Astrocyte of the cerebellum (primary cell): ENCODE measurements at regions of chr12 and their contacts with region 1.

Region 1: GRCh38 chr12:26732005-26732908 is 100.7 kb downstream of the ITPR2 start:
- DNase-seq: no peak
- H3K4me3 ChIP-seq: no peak overlapping the region
- CTCF ChIP-seq: no peak

Region 2: DNA sequence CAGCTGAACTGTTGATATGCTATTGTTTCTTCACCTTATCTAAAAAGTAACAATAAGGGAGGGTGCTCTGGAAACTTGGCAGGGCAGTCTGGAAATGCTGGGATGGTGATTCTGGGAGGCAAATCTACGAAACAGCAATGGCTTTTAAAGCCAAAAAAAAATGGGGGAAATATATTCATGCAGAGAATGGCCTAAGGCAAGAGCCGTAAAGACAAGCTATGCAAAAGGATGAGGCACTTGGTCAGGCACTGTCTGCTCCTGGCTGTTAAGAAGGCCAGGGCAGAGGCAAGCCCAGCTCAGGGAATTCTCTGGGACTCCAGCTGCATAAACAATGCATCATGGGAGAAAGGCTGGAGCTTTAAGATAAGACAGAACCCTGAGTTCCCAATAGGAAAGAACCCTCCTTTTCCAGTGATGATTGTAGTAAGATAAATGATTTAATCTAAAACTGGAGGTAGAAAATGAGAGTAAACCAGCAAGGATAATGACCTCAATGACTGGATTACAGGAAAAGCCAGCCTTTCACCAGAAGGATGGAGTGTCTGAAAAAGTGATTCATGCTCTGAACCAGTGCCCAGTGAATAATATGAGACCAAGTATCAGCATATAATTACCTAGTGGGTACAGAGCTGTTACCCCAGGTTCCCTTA is 54.7 kb after region 1 on chr12:
- in situ Hi-C with region 1: loop called (anchors 5 kb)
- DNase-seq: peak; percentile 73
- H3K4me3 ChIP-seq: no peak overlapping the region
- CTCF ChIP-seq: no peak